Left cardiac atrium (tissue), 4 donors: ENCODE measurements at regions of chr19 and their contacts with region 1.

Region 1: GRCh38 chr19:14347999-14348889 is 33.0 kb upstream of the ADGRE5 start:
- DNase-seq: peak; percentile 74
- ATAC-seq: peak; percentile 88 to 90

Region 2: GRCh38 chr19:14147797-14148605 is 200.2 kb before region 1 on chr19:
- intact Hi-C with region 1: loop called (anchors 2 to 10 kb)
- DNase-seq: peak; percentile 85
- ATAC-seq: peak; percentile 83 to 87

Region 3: DNA sequence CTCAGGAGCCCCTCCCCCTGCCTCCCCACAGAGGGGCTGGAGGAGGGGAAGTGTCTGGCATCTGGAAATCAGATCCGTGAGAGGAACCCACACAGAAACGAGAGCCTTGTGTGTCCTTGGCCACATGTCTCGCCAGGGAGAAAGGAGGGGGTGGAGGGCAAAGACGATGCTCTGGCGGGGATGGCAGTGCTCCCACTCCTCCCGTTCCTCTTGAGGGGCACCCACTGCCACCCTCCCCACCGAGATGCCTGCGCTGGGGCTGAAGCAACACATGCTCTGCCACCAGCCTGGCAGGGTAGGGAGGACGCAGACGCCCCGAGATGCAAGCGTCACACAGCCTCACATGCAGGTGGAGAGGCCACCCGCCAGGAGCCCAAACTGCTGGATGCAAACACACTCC is 145.1 kb before region 1 on chr19:
- intact Hi-C with region 1: loop called in 1 of 2 experiments (anchors 5 kb)
- DNase-seq: no peak
- ATAC-seq: no peak

Region 4: DNA sequence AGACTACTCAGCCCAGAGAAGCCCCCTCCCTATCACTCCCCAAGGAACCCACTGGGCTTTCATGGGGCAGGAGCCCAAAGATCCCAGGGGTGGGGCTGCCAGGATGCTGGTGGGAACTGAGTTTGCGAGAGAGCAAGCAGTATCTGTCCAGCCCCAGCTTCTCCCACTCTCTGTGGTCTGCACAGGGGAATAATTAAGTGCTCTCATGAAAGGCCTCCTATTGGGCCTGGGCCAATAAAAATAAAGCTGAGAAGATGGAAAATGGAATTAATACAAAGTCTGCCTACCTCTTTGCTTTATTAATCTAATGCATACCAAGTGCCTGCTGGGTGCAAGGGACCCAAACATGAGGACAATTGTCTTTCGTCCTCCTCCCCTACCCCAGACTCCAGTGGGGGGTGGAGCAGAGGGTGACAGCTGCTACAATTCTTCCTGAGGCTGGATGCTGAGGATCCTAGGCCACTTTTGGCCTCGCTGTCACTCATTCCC is 65.5 kb after region 1 on chr19:
- intact Hi-C with region 1: no loop called
- DNase-seq: no peak
- ATAC-seq: peak in 1 of 2 donors; percentile 7

Region 5: GRCh38 chr19:14505488-14506432 is 157.5 kb after region 1 on chr19:
- intact Hi-C with region 1: no loop called
- DNase-seq: peak; percentile 50
- ATAC-seq: peak; percentile 31 to 33